ENCODE measurements at regions of chr15 and their contacts with region 1.

Region 1: GRCh38 chr15:67456677-67457529 is 64.0 kb upstream of the C15orf61 start:
- DNase-seq: peak; percentile 47 to 60
- ATAC-seq: peak; percentile 45 to 73
- H3K4me3 ChIP-seq: no peak overlapping the region
- H3K27ac ChIP-seq: no peak overlapping the region
- H3K4me1 ChIP-seq: no peaks in the 10 kb centered on the region
- H3K27me3 ChIP-seq: no peaks in the 10 kb centered on the region
- CTCF ChIP-seq: peak; percentile 42 to 82 (median 69)
- POLR2A ChIP-seq: no peak

Region 2: DNA sequence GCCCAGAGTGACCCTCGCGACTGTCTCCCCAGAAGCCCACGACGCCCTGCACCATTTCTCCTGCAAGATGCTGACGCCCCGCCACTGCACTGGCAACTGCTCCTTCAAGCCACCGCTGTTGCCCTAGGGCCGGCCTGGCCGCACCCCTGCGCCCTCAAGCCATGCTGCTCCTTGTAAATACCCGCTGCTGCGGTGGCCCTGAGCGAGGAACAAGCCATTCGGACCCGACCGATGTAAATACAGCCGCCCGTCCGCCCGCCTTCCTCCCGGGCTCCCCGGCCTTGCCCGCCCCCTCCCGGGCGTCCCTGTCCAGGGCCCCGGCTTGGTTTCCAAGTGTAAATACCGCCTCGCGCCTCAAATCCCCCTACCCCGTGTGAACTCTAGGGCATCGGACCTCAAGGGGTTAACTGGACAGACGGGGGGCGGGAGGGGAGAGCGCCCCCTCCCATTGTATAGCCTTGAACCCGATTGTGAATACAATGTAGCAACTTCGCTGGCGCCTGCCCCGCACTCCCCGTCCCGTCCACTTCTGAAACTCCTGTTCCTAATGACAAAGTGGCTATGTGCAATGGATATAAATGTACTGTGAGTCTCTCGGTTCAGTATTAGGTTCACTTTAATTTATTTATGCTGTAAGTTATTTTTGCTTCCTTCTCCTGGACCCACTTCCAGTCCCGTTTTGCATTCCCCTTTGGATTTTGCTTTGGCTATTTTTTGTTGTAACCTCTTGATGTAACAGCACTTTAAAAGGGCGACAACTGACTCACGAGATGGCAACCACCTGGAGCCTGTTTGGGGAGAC is 377.0 kb after region 1 on chr15:
- in situ Hi-C with region 1: loop called (anchors 5 to 10 kb)
- intact Hi-C with region 1: loop called (anchors 1 kb)
- DNase-seq: no peak
- ATAC-seq: no peak
- H3K4me3 ChIP-seq: peak overlapping the region; percentile 24 to 44 (median 28)
- H3K27ac ChIP-seq: no peak overlapping the region
- H3K4me1 ChIP-seq: peaks cover 13 to 34% of the 10 kb centered on the region in 2 donors
- H3K27me3 ChIP-seq: peaks cover 44 to 61% (median 60%) of the 10 kb centered on the region in 3 donors
- CTCF ChIP-seq: peak in 4 of 5 experiments; percentile 17 to 50 (median 31)
- POLR2A ChIP-seq: no peak

Measured in gastrocnemius medialis (tissue), 4 donors.